Head of caudate nucleus (tissue), 42 donors: ENCODE measurements at regions of chr7 and their contacts with region 1.

Region 1: GRCh38 chr7:155598810-155599210 is 45.7 kb upstream of the RBM33 start:
- DNase-seq: peak; percentile 47 to 96 (median 89)

Region 2: GRCh38 chr7:155738652-155739537 is 140.1 kb after region 1 on chr7:
- intact Hi-C with region 1: loop called (anchors 5 kb)
- DNase-seq: peak in 41 of 42 donors; percentile 64 to 93 (median 83)

Region 3: DNA sequence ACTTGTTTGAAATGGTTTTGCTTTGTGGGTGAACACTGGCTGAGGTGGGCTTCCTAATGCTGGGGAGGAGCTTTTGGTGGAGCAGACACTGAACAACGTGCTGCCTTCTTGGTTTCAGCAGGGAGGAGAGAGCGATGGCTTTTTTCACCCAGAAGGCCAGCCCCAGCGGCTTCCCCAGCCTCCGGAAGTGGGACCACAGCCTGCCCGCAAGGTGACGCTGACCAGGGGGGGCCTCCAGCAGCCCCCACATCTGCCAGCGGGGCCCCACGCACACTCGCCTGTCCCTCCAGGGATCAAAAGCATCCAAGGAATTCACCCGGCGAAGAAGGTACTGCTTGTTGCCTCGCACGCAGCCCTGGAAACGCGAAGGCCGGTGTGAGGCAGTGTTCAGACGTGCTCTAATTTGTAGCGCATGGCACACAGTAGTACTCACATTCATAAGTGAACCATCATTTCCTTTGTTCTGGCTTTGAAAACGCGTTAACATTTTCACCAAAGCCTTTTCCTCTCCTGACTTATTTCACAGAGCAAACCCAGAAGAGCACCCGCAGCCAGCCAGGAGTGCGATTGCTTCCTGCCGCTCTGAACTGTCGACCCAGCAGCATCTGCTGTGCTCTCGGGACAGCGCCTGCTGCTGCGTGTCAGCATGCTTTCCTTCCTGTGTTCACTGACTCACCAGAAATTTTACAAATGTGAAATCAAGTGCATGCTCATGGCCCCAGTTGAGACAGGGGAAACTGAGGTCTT is 165.1 kb after region 1 on chr7:
- intact Hi-C with region 1: loop called (anchors 10 kb)
- DNase-seq: peak in 1 of 42 donors; percentile 40